ENCODE measurements at regions of chr1 and their contacts with region 1.

Region 1: GRCh38 chr1:180631766-180632325 is at the start of gene XPR1:
- DNase-seq: peak; percentile 97 to 99 (median 99)
- ATAC-seq: peak; percentile 96
- H3K4me3 ChIP-seq: peak within 1 kb of the TSS; percentile 93 to 94
- H3K4me3 Mint-ChIP-seq: no peak within 1 kb of the TSS
- H3K27ac ChIP-seq: peak within 1 kb of the TSS; percentile 89 to 94
- H3K27ac Mint-ChIP-seq: peak within 1 kb of the TSS; percentile 43
- H3K4me1 ChIP-seq: peaks cover 23% of the 10 kb centered on the region
- H3K4me1 Mint-ChIP-seq: peaks cover 20% of the 10 kb centered on the region
- H3K27me3 ChIP-seq: no peaks in the 10 kb centered on the region
- H3K27me3 Mint-ChIP-seq: peaks cover 3% of the 10 kb centered on the region
- CTCF ChIP-seq: no peak
- total RNA-seq, gene XPR1: 11.6 to 12.3 TPM

Region 2: DNA sequence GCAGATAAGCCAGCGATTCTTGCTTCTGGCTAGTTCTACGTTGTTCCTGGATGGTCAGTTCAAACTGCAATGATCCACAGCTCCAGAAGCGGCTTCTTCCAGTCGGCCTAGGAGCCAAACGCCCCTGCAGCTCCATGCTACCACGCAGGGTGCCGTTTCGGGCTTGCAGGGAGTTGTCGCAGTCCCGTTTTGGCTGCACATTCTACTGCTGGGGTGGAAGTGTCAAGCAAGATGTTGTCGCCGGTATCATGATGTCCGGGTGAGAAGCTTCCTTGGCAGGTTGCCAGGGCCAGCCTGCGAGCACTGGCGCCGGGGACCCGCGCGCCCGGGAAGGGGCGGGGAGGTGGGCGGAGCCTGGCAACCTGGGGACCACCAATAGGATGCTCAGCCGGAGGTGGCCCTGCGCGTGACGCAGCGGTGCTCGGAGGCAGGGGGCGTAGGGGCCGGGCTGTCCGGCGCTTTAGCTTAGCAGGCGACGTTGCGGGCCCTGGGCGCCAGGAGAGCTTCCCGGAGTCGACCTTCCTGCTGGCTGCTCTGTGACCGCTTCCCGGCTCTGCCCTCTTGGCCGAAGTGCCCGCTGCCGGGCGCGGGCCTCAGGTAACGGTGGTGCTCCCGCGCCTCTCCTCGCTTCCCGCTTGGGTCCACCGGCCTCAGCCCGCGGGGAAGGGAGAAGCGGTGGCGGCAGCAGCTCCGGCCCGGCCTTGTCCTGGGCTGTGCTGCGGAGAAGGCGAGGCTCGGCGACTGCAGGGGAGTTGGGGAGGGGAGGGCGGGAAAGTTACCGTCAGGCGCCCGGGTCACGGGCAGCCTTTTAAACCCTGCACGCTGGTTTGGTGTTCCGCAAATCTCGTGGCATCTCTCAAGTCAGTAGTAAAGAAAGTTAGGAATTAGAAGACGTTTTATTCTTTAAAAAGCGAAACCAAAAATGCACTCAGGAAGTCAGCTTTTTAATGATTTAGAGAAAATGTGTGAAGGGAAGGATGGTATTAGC is 1338.2 kb before region 1 on chr1 and contains the start of gene SOAT1:
- CTCF ChIA-PET with region 1: no interaction called
- POLR2A ChIA-PET with region 1: no interaction called
- intact Hi-C with region 1: loop called (anchors 5 to 10 kb)
- DNase-seq: peak; percentile 82 to 97 (median 95)
- ATAC-seq: peak; percentile 96
- H3K4me3 ChIP-seq: peak within 1 kb of the TSS; percentile 88 to 92
- H3K4me3 Mint-ChIP-seq: peak within 1 kb of the TSS; percentile 91
- H3K27ac ChIP-seq: peak within 1 kb of the TSS; percentile 92 to 93
- H3K27ac Mint-ChIP-seq: peak within 1 kb of the TSS; percentile 93
- H3K4me1 ChIP-seq: peaks cover 39% of the 10 kb centered on the region
- H3K4me1 Mint-ChIP-seq: peaks cover 48% of the 10 kb centered on the region
- H3K27me3 ChIP-seq: no peaks in the 10 kb centered on the region
- H3K27me3 Mint-ChIP-seq: no peaks in the 10 kb centered on the region
- CTCF ChIP-seq: no peak
- total RNA-seq, gene SOAT1: 34.9 TPM

Region 3: DNA sequence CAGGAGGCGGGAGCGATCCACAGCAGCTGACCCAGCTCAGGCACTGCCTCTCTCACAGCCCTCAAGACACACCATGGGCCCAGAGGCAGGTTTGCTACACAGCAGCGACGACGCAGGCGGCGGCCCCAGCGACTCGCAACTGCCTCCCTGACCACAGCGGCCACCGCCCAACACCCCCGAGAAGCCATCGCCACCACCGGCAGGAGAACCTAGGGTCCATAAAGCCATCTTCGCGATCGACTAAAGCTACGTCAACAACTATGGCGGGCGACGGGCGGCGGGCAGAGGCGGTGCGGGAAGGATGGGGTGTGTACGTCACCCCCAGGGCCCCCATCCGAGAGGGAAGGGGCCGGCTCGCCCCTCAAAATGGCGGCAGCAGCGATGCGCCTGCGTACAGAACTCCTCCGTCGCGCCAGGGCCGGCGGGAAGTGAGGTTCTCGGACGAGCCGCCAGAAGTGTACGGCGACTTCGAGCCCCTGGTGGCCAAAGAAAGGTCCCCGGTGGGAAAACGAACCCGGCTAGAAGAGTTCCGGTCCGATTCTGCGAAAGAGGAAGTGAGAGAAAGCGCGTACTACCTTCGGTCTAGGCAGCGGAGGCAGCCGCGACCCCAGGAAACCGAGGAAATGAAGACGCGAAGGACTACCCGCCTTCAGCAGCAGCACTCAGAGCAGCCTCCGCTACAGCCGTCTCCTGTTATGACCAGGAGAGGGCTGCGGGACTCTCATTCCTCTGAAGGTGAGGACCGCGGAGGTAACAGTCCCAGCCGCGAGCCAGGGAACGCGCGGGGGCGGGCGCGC is 749.4 kb before region 1 on chr1 and contains the start of gene TOR1AIP1:
- CTCF ChIA-PET with region 1: no interaction called
- POLR2A ChIA-PET with region 1: no interaction called
- intact Hi-C with region 1: loop called (anchors 5 kb)
- DNase-seq: peak; percentile 95 to 99 (median 97)
- ATAC-seq: peak; percentile 74
- H3K4me3 ChIP-seq: peak within 1 kb of the TSS; percentile 91 to 95
- H3K4me3 Mint-ChIP-seq: peak within 1 kb of the TSS; percentile 94
- H3K27ac ChIP-seq: peak within 1 kb of the TSS; percentile 98 to 99
- H3K27ac Mint-ChIP-seq: peak within 1 kb of the TSS; percentile 100
- H3K4me1 ChIP-seq: peaks cover 37% of the 10 kb centered on the region
- H3K4me1 Mint-ChIP-seq: peaks cover 59% of the 10 kb centered on the region
- H3K27me3 ChIP-seq: no peaks in the 10 kb centered on the region
- H3K27me3 Mint-ChIP-seq: no peaks in the 10 kb centered on the region
- CTCF ChIP-seq: peak; percentile 41
- total RNA-seq, gene TOR1AIP1: 108 to 110 TPM

Region 4: DNA sequence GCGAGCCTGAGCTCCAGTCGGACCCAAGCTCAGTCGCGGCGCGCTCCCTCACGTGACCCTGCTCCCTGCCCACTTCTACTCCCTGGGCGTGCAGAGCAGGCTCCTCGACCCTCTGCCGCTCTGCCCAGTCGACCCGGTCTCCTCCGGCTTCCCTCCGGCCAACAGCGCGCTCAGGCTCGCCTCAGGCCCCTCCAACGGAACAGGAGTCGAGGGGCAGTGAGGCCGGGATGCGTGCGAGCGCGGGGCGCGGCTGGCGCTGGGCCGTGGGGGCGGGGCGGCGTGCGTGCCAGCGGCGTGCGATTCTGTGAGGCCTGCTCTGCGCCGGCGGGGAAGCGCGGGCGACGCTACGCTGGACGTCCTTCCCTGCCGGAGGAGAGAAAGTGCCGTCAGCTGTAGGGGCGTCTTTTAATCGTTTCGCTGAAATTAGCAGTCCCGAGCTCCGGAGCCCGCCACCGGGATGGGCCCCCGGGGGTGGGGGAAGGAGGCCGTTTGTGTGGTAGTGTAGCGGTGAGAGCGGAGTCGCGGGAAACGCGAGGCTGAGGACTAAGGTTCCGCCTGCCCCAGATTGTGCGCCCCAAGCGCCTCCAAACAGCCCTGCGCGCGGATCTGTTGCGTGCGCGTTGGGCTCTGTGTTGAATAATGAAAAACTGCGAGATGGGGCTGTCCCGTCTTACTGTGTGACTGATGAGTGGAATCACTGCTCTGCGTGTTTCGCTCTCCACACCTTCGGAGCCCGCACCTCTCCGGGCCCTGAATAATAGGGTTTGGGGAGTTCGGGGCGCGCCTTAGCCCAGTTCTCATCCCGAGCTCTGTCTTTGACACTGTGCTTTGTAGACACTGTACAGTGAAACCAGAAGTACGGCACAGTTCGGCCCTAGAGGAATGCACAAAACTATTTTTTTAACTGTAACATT is 129.2 kb before region 1 on chr1 and contains the start of gene ACBD6:
- CTCF ChIA-PET with region 1: no interaction called
- POLR2A ChIA-PET with region 1: no interaction called
- intact Hi-C with region 1: loop called (anchors 1 to 2 kb)
- DNase-seq: peak; percentile 73 to 92 (median 84)
- ATAC-seq: peak; percentile 89
- H3K4me3 ChIP-seq: peak within 1 kb of the TSS; percentile 96 to 97
- H3K4me3 Mint-ChIP-seq: peak within 1 kb of the TSS; percentile 96
- H3K27ac ChIP-seq: peak within 1 kb of the TSS; percentile 75 to 76
- H3K27ac Mint-ChIP-seq: peak within 1 kb of the TSS; percentile 98
- H3K4me1 ChIP-seq: peaks cover 27% of the 10 kb centered on the region
- H3K4me1 Mint-ChIP-seq: peaks cover 47% of the 10 kb centered on the region
- H3K27me3 ChIP-seq: no peaks in the 10 kb centered on the region
- H3K27me3 Mint-ChIP-seq: no peaks in the 10 kb centered on the region
- CTCF ChIP-seq: no peak
- total RNA-seq, gene ACBD6: 23.4 to 24.6 TPM

Region 5: DNA sequence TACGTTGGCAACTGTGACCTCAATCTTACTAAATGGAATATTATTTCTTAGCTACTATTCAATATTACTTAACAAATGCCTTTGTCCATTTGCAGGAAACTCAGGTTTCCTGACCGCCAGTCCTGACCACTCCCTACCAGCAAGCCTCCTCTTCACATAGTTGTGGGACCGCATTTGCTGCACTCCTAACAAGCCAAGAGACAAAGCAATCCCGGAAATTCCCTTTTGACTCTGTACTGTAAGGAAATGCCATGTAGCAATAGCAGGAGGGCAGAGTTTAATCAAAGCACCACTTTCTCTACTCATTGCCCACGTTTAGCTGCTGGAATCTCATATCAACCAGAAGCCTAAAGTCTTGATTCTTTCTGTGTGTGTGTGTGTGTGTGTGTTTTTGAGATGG is 101.3 kb before region 1 on chr1:
- CTCF ChIA-PET with region 1: no interaction called
- POLR2A ChIA-PET with region 1: no interaction called
- intact Hi-C with region 1: no loop called
- DNase-seq: no peak
- ATAC-seq: no peak
- H3K4me3 ChIP-seq: no peak overlapping the region
- H3K4me3 Mint-ChIP-seq: no peak overlapping the region
- H3K27ac ChIP-seq: no peak overlapping the region
- H3K27ac Mint-ChIP-seq: no peak overlapping the region
- H3K4me1 ChIP-seq: no peaks in the 10 kb centered on the region
- H3K4me1 Mint-ChIP-seq: no peaks in the 10 kb centered on the region
- H3K27me3 ChIP-seq: no peaks in the 10 kb centered on the region
- H3K27me3 Mint-ChIP-seq: peaks cover 3% of the 10 kb centered on the region
- CTCF ChIP-seq: no peak

Region 6: GRCh38 chr1:181021811-181022434 is 390.1 kb after region 1 on chr1:
- CTCF ChIA-PET with region 1: no interaction called
- POLR2A ChIA-PET with region 1: no interaction called
- intact Hi-C with region 1: loop called (anchors 5 kb)
- DNase-seq: peak in 8 of 9 experiments; percentile 42 to 82 (median 59)
- ATAC-seq: peak; percentile 37
- H3K4me3 ChIP-seq: peak overlapping the region; percentile 84 to 91
- H3K4me3 Mint-ChIP-seq: peak overlapping the region; percentile 95
- H3K27ac ChIP-seq: peak overlapping the region; percentile 71 to 84
- H3K27ac Mint-ChIP-seq: peak overlapping the region; percentile 96
- H3K4me1 ChIP-seq: peaks cover 31% of the 10 kb centered on the region
- H3K4me1 Mint-ChIP-seq: peaks cover 44% of the 10 kb centered on the region
- H3K27me3 ChIP-seq: no peaks in the 10 kb centered on the region
- H3K27me3 Mint-ChIP-seq: no peaks in the 10 kb centered on the region
- CTCF ChIP-seq: no peak

Region 7: GRCh38 chr1:181152892-181153633 is 521.2 kb after region 1 on chr1:
- CTCF ChIA-PET with region 1: no interaction called
- POLR2A ChIA-PET with region 1: no interaction called
- intact Hi-C with region 1: loop called in 1 of 2 experiments (anchors 5 kb)
- DNase-seq: peak in 1 of 9 experiments; percentile 22
- ATAC-seq: no peak
- H3K4me3 ChIP-seq: no peak overlapping the region
- H3K4me3 Mint-ChIP-seq: no peak overlapping the region
- H3K27ac ChIP-seq: no peak overlapping the region
- H3K27ac Mint-ChIP-seq: no peak overlapping the region
- H3K4me1 ChIP-seq: peaks cover 49% of the 10 kb centered on the region
- H3K4me1 Mint-ChIP-seq: peaks cover 48% of the 10 kb centered on the region
- H3K27me3 ChIP-seq: no peaks in the 10 kb centered on the region
- H3K27me3 Mint-ChIP-seq: no peaks in the 10 kb centered on the region
- CTCF ChIP-seq: no peak

Region 8: DNA sequence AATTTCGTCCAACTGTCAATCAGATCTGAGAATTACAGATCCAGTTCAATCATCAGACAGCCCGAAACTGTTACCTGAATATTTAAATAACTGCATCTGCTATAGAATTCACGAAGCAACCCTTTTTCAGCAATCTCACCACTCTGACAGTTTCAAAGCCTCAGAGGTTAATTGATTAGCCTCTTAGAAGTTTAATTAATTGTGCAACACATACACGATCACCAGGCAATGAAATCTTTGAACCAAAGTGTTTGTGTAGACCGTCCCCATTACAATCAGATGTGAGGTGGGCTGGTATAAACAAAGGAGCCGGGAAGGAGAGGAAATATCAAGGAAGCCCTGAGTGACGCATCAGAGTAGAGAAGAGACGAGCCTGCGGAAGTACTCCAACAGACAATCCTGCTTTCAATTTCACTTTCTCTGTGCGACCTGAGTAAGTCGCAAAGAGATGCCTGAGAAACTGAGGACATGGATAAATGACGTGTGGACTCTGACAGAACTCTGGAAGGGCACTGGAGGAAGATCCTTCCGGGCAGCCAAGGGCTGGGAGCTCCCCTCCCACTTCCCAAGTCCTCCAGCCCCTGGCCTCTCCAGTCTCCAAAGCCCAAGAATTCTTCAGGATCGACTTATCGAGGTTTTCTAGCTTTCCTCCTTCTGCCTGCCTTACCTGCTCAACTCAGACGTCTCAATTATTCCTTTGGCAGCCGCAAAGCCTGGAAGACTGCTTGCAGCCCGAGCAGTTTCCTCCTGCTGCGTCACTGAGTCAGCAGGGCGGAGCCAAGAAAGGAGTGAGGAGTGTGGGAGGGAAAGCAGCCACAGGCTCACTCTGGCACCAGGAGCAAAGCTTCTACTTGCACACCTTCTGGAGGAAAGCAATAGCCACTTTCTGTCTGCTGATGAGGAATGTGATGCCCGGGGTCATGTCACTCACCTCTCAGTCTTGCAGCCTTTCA is 1956.9 kb after region 1 on chr1 and contains the start of gene RNASEL:
- CTCF ChIA-PET with region 1: no interaction called
- POLR2A ChIA-PET with region 1: no interaction called
- intact Hi-C with region 1: loop called in 1 of 2 experiments (anchors 5 kb)
- DNase-seq: peak; percentile 24 to 87 (median 51)
- ATAC-seq: peak; percentile 92
- H3K4me3 ChIP-seq: peak within 1 kb of the TSS; percentile 78 to 95
- H3K4me3 Mint-ChIP-seq: peak within 1 kb of the TSS; percentile 94
- H3K27ac ChIP-seq: peak within 1 kb of the TSS; percentile 96 to 99
- H3K27ac Mint-ChIP-seq: peak within 1 kb of the TSS; percentile 99
- H3K4me1 ChIP-seq: peaks cover 44% of the 10 kb centered on the region
- H3K4me1 Mint-ChIP-seq: peaks cover 52% of the 10 kb centered on the region
- H3K27me3 ChIP-seq: no peaks in the 10 kb centered on the region
- H3K27me3 Mint-ChIP-seq: peaks cover 3% of the 10 kb centered on the region
- CTCF ChIP-seq: no peak
- total RNA-seq, gene RNASEL: 1.5 to 1.7 TPM